CD14-positive monocyte (primary cell): ENCODE measurements at regions of chr15 and their contacts with region 1.

Region 1: GRCh38 chr15:78299101-78299930 is at the start of gene SKIC8:
- DNase-seq: peak; percentile 89 to 91 (median 90)
- H3K4me3 ChIP-seq: peak within 1 kb of the TSS; percentile 63 to 94 (median 82)
- H3K4me3 Mint-ChIP-seq: peak within 1 kb of the TSS; percentile 94 to 98
- H3K27ac ChIP-seq: peak within 1 kb of the TSS; percentile 89 to 93
- H3K27ac Mint-ChIP-seq: peak within 1 kb of the TSS; percentile 94 to 97 (median 96)
- H3K4me1 ChIP-seq: peaks cover 49 to 54% of the 10 kb centered on the region in 2 donors
- H3K4me1 Mint-ChIP-seq: peaks cover 44% of the 10 kb centered on the region
- H3K27me3 ChIP-seq: no peaks in the 10 kb centered on the region
- H3K27me3 Mint-ChIP-seq: peaks cover 0 to 2% (median 0%) of the 10 kb centered on the region in 3 donors
- CTCF ChIP-seq: no peak
- polyA plus RNA-seq, gene SKIC8: 59.8 to 123 (median 88.0) TPM

Region 2: DNA sequence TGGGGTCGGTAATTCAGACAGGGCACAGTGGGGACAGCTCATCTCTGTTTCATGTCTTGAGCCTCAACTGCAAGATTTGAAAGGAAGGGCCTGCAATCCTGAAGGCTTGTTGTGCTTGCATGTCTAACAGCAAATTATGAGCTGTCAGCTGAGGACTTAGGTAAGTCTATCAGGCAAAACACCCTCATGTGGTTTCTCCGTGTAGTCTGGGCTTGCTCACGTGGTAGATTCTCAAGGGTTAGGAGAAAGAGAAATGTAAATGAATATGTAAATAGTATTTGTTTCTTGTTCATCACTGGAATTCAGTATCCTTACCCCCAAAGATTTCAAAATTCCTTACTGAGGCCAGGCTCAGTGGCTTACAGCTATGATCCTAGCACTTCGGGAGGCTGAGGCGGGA is 178.0 kb after region 1 on chr15:
- intact Hi-C with region 1: no loop called
- DNase-seq: no peak
- H3K4me3 ChIP-seq: no peak overlapping the region
- H3K4me3 Mint-ChIP-seq: no peak overlapping the region
- H3K27ac ChIP-seq: peak overlapping the region in 1 of 2 donors; percentile 42
- H3K27ac Mint-ChIP-seq: peak overlapping the region in 1 of 7 donors; percentile 52
- H3K4me1 ChIP-seq: no peaks in the 10 kb centered on the region
- H3K4me1 Mint-ChIP-seq: no peaks in the 10 kb centered on the region
- H3K27me3 ChIP-seq: no peaks in the 10 kb centered on the region
- H3K27me3 Mint-ChIP-seq: peaks cover 0 to 2% (median 0%) of the 10 kb centered on the region in 3 donors
- CTCF ChIP-seq: no peak

Region 3: DNA sequence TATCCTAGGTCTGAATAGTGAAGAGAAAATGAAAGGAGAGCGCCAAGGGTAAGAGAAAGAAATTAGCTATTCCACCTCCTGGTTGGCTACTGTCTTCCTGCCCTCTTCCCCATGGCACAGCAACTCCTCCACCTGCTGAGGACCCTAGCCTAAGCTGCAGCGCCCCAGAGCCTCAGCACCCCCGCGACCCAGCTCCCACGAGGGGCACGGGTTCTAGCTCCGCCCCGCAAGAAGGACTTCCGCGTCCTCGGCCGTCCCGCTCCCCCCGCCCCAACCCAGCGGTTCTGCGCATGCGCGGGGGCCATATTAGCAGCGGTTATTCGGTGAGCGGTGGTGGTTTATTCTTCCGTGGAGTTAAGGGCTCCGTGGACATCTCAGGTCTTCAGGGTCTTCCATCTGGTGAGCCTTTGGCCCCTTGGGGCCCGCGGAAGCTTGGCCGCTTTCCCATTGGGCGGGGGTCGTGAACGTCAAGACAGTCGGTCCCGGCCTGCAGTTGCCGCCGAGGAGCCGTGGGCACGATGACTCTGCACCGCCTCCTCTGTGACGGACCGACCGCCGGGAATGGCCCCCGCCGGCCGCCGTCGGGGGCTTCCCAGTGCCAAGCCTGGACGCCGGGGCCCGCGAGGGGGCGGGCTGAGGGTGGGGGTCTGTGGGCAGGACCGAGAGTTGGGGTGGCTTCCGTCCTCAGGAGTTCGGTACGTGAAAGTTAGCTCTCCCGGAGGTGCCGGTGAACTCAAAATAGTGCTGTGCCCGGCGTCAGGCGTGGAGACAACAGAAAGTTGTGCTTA is 241.0 kb after region 1 on chr15 and contains the start of gene PSMA4:
- intact Hi-C with region 1: loop called in 1 of 2 experiments (anchors 5 kb)
- DNase-seq: peak; percentile 83 to 89 (median 84)
- H3K4me3 ChIP-seq: peak within 1 kb of the TSS; percentile 67 to 89 (median 77)
- H3K4me3 Mint-ChIP-seq: peak within 1 kb of the TSS; percentile 94 to 98
- H3K27ac ChIP-seq: peak within 1 kb of the TSS; percentile 94 to 97
- H3K27ac Mint-ChIP-seq: peak within 1 kb of the TSS; percentile 98 to 100 (median 99)
- H3K4me1 ChIP-seq: peaks cover 16 to 21% of the 10 kb centered on the region in 2 donors
- H3K4me1 Mint-ChIP-seq: peaks cover 27% of the 10 kb centered on the region
- H3K27me3 ChIP-seq: no peaks in the 10 kb centered on the region
- H3K27me3 Mint-ChIP-seq: peaks cover 0 to 2% (median 1%) of the 10 kb centered on the region in 3 donors
- CTCF ChIP-seq: no peak
- polyA plus RNA-seq, gene PSMA4: 121 to 421 (median 406) TPM